ENCODE measurements at regions of chr7 and their contacts with region 1.

Region 1: GRCh38 chr7:148856891-148857290 is 27.2 kb downstream of the EZH2 start:
- DNase-seq: peak in 2 of 3 donors; percentile 26 to 44
- H3K4me3 ChIP-seq: no peak overlapping the region
- H3K27ac ChIP-seq: no peak overlapping the region
- H3K4me1 ChIP-seq: peaks cover 0 to 5% (median 2%) of the 10 kb centered on the region in 4 experiments
- H3K27me3 ChIP-seq: no peaks in the 10 kb centered on the region

Region 2: DNA sequence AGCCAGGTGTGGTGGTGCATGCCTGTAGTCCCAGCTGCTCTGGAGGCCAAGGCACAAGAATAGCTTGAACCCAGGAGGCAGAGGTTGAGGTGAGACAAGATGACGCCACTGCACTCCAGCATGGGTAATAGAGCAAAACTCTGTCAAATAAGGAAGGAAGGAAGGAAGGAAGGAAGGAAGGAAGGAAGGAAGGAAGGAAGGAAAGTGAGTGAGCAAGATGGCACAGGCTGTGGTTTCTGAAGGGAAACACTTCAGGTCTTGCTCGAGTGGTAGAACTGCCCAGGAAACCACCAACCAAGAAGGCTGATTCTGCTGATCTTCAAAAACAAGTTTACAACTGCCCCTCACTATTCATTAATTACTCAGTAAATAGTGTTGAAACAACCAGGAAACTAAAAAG is 18.0 kb before region 1 on chr7:
- CTCF ChIA-PET with region 1: interaction called, 13 read pairs
- POLR2A ChIA-PET with region 1: no interaction called
- DNase-seq: peak; percentile 74 to 95 (median 92)
- H3K4me3 ChIP-seq: peak overlapping the region in 1 of 7 experiments; percentile 10
- H3K27ac ChIP-seq: no peak overlapping the region
- H3K4me1 ChIP-seq: peaks cover 7 to 25% (median 15%) of the 10 kb centered on the region in 4 experiments
- H3K27me3 ChIP-seq: no peaks in the 10 kb centered on the region

Region 3: GRCh38 chr7:148872188-148872587 is 15.3 kb after region 1 on chr7:
- CTCF ChIA-PET with region 1: interaction called, 15 read pairs
- POLR2A ChIA-PET with region 1: no interaction called
- DNase-seq: no peak
- H3K4me3 ChIP-seq: no peak overlapping the region
- H3K27ac ChIP-seq: no peak overlapping the region
- H3K4me1 ChIP-seq: peaks cover 0 to 10% (median 2%) of the 10 kb centered on the region in 4 experiments
- H3K27me3 ChIP-seq: no peaks in the 10 kb centered on the region

Region 4: GRCh38 chr7:148893071-148893470 is 36.2 kb after region 1 on chr7:
- CTCF ChIA-PET with region 1: no interaction called
- POLR2A ChIA-PET with region 1: no interaction called
- DNase-seq: no peak
- H3K4me3 ChIP-seq: no peak overlapping the region
- H3K27ac ChIP-seq: no peak overlapping the region
- H3K4me1 ChIP-seq: no peaks in the 10 kb centered on the region
- H3K27me3 ChIP-seq: no peaks in the 10 kb centered on the region